ENCODE measurements at regions of chr11 and their contacts with region 1.

Region 1: DNA sequence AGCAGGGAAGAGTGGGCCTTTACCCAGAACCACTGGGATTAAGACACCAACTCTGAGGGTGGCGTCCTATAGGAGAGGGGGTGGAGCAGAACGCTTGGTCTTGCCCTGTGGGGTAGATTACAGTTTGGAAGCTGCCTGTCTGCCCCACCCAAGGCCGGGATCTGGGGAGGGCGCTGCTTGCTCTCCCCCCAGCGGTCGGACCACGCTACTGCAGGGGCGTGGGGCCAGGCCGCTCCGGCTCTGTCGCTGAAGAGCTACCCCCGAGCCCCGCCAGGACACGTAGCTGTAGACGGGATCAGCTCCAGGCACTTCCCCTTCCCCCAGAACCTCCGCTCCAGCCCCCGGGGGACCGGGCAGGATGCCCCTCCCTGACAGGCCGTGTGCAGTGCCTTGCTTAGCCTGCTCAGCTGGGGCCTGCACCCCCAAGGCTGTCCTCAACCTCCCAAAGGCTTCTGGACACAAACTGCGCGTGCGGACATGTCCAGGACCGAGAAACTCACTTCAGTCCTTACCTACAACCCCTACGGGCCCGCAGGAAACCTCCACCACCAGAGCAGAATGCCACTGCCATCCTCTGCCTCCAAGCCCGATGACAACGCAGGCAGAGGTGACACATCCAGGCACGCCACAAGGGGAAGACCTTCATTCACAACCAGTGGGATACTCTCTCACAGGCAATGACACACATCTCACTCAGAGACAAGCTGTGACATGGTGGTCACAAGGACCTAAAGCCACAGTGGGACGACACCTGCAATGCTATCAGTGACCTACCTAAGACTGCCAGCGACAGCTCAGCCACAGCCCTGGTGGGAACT is 3.6 kb downstream of the AHNAK start:
- DNase-seq: peak; percentile 81
- ATAC-seq: peak; percentile 36
- H3K4me3 Mint-ChIP-seq: peak overlapping the region; percentile 90
- H3K27ac Mint-ChIP-seq: peak overlapping the region; percentile 84
- H3K4me1 Mint-ChIP-seq: peaks cover 78% of the 10 kb centered on the region
- H3K27me3 Mint-ChIP-seq: peaks cover 7% of the 10 kb centered on the region

Region 2: DNA sequence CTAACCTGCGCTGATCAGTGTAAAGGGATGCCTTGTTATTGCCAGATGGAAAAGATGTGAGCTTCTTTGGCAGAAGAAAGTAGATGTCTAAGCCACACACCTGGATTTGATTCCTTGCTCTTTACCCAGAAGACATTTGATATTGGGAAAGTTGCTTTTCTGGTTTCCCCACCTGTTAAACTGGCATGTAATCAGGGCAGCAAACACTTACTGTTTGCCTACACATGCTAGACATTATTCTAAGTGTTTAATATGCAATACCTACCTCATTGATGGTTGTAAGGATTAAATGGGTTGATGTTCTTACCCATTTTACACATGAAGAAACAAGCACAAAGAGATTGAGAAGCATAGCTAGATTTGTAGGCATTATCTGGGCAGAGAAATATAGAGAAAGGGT is 189.1 kb before region 1 on chr11:
- CTCF ChIA-PET with region 1: no interaction called
- POLR2A ChIA-PET with region 1: no interaction called
- DNase-seq: no peak
- ATAC-seq: no peak
- H3K4me3 Mint-ChIP-seq: no peak overlapping the region
- H3K27ac Mint-ChIP-seq: no peak overlapping the region
- H3K4me1 Mint-ChIP-seq: peaks cover 5% of the 10 kb centered on the region
- H3K27me3 Mint-ChIP-seq: no peaks in the 10 kb centered on the region

Region 3: DNA sequence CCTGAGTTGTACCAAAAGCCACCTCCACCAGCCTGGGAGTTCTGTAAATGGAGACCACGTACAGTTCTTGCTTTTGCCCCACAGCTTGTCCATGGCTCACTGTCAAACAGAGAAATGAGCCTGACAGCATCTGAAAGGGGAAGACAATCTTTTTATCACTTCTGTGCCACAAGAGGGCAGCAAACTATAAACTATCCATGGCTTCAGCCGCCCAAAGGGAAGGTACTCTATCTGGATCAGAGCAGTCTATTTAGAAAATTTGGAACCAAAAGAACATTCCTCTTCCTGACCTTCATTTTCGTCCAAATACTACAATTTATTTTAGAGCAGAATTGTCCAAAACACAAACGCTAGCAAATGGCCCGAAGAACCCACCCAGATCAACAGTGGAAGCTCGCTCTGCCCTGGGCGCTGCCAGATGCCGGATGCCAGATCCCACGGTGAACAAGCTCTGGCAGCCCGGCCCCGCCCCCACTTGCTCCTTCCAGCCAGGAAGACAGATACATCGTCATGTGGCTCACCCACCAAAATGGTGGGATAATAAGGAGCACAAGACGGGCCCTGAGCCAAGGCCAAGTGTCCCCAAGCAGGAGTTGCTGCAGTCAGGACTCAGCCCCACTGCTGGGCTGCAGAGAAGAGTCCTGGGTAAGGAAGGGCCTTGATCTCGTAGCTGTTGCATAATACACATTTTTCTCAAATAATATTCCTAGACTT is 148.0 kb before region 1 on chr11:
- CTCF ChIA-PET with region 1: interaction called, 69 read pairs
- POLR2A ChIA-PET with region 1: no interaction called
- DNase-seq: peak; percentile 73
- ATAC-seq: peak; percentile 82
- H3K4me3 Mint-ChIP-seq: no peak overlapping the region
- H3K27ac Mint-ChIP-seq: no peak overlapping the region
- H3K4me1 Mint-ChIP-seq: peaks cover 33% of the 10 kb centered on the region
- H3K27me3 Mint-ChIP-seq: no peaks in the 10 kb centered on the region

Region 4: DNA sequence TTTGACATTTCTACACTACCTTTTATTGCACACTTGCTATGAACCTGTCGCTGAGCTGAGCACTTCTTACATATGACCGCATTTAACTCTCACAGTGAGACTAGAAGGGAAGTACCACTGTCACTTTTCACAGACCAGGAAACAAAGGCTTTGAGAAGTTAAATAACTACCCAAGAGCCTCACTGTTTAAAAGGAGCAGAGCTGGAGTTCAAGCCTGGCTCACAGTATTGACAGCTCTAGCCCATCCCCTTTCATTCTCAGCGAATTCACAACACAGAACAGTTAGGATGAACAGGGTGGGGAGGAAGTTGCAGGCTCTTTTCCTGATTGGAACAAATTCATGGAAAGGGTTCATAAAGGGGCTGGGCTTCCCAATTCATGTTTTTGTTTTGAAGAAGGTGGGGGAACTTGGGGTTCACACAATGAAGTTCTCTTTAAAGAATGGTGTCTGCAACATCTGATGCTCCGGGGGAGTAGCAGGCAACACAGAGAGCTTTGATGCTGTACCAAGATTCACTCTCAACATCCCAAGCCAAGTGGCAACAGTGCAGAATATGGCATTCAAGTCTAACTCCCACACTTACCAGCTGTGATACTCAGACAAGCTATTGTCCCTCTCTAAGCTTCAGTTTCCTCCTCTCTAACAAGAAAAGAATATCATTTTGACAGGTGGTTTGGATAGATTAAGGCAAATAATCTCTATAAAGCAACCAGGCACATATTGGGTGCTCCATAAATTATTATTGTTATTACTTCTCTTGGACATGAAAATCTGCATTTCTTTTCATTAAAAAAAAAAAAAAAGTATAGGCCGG is 106.9 kb before region 1 on chr11:
- CTCF ChIA-PET with region 1: interaction called, 11 read pairs
- POLR2A ChIA-PET with region 1: no interaction called
- DNase-seq: no peak
- ATAC-seq: no peak
- H3K4me3 Mint-ChIP-seq: no peak overlapping the region
- H3K27ac Mint-ChIP-seq: no peak overlapping the region
- H3K4me1 Mint-ChIP-seq: peaks cover 39% of the 10 kb centered on the region
- H3K27me3 Mint-ChIP-seq: no peaks in the 10 kb centered on the region

Region 5: GRCh38 chr11:62501432-62502379 is 41.3 kb before region 1 on chr11:
- CTCF ChIA-PET with region 1: interaction called, 16 read pairs
- POLR2A ChIA-PET with region 1: no interaction called
- DNase-seq: no peak
- ATAC-seq: no peak
- H3K4me3 Mint-ChIP-seq: no peak overlapping the region
- H3K27ac Mint-ChIP-seq: no peak overlapping the region
- H3K4me1 Mint-ChIP-seq: peaks cover 4% of the 10 kb centered on the region
- H3K27me3 Mint-ChIP-seq: peaks cover 23% of the 10 kb centered on the region

Region 6: GRCh38 chr11:62567018-62567633 is 24.2 kb after region 1 on chr11:
- CTCF ChIA-PET with region 1: interaction called, 49 read pairs
- POLR2A ChIA-PET with region 1: interaction called, 4 read pairs
- DNase-seq: no peak
- ATAC-seq: peak; percentile 18
- H3K4me3 Mint-ChIP-seq: no peak overlapping the region
- H3K27ac Mint-ChIP-seq: peak overlapping the region; percentile 32
- H3K4me1 Mint-ChIP-seq: peaks cover 51% of the 10 kb centered on the region
- H3K27me3 Mint-ChIP-seq: no peaks in the 10 kb centered on the region

Region 7: DNA sequence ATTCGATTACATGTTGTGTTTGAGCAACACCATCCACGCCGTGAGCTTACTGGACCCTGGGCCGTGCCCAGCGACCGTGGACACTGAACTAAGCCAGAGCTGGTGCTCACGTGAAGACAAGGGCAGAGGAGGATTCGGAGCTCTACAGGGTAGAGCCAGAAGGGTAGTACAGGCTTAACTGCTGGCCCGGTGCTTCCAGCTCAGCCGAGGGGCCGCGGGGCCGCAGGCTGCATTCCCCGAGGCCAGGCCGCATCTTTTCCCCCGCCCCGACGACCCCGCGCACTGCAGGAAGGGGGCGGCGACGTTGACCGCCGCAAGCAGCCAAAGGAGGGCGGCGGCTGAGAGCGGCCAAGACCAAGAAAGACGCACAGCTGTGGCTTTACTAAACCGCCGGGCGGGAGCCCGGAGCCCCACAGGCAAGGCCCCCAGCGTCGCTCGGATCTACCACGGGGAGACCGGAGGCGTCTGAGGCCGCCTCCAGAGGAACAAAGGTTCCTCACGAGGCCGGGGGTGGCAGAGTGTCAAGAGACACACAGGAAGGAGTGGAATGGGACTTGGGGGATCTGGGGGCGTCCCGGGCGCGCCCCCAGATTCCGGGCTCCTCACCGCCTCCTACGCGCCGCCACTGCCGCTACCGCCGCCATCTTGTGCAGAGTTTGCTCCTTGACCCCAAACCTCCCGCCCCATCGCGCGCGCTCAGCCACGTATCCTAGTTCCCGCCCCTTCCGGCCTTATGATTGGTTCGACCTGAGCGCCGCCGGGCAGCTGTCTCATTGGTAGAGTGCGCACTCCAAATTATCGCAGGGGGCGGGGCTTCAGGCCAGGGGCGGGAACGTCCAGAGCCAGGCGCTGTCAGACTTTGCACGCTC is 103.2 kb after region 1 on chr11 and contains the start of gene GANAB:
- CTCF ChIA-PET with region 1: no interaction called
- POLR2A ChIA-PET with region 1: no interaction called
- DNase-seq: peak; percentile 100
- ATAC-seq: peak; percentile 98
- H3K4me3 Mint-ChIP-seq: peak within 1 kb of the TSS; percentile 99
- H3K27ac Mint-ChIP-seq: peak within 1 kb of the TSS; percentile 96
- H3K4me1 Mint-ChIP-seq: peaks cover 32% of the 10 kb centered on the region
- H3K27me3 Mint-ChIP-seq: no peaks in the 10 kb centered on the region
- total RNA-seq, gene GANAB: 297 to 310 TPM

Measured in activated CD8-positive, alpha-beta T cell treated with anti-CD3 and anti-CD28 coated beads, Interleukin-2, amount 10 ng/mL, durations not matched to agents 7 days and 5 days (primary cell).